A549 (cell line): ENCODE measurements at regions of chr6 and their contacts with region 1.

Region 1: DNA sequence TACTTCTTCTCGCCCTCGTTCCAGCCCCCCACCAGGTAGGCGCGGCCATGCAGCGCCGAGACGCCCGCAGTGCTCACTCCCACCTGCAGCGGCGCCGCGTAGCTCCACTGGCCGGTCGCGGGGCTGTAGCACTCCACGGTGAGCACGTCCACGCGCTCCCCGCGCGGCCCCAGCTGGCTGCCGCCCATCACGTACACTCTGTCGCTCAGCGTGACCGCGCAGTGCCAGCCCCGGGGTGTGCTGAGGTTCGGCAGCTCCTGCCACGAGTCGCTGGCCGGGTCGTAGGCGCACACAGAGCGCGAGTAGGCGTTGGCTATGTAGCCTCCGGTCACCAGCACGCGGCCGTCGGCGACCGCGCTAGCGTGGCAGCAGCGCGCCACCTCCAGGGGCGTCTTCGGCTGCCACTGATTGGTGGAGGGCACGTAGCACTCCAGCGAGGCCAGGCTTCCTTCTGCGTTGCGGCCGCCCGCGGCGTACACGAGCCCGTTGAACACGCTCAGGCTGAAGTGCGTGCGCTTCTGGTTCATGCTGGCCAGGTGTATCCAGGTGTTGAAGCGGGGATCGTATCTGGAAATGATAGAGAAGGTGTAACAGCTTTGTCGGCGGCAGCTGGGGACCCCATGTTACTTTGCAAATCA is 13.7 kb downstream of the KLHL31 start:
- DNase-seq: peak; percentile 44 to 88
- ATAC-seq: peak; percentile 98
- H3K4me3 ChIP-seq: peak overlapping the region; percentile 58
- H3K27ac ChIP-seq: peak overlapping the region; percentile 85 to 99
- H3K4me1 ChIP-seq: peaks cover 34% of the 10 kb centered on the region
- CTCF ChIP-seq: peak; percentile 44
- EP300 ChIP-seq: no peak
- POLR2A ChIP-seq: peak; percentile 64
- RAD21 ChIP-seq: peak; percentile 36 to 52; a peak in 3 of 5 replicates

Region 2: DNA sequence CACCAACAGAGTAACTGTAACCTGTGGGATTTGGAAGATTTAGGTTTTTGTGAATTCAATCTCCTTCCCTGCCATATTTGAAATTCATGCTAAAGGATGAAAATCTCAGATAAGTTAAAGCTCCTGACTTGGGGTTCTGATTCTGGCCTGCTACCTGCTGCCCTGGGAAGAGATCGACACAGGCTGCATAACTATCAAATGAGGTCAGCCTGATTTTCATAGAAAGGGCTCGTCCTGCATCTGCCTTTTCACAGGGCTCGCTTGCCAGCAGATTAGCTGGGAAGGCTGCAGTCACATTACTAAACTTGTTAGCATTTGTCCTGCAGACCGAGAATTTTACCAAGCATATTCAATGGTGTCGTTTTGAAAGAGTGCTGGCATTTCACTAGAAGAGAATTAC is 121.5 kb before region 1 on chr6:
- CTCF ChIA-PET with region 1: interaction called, 13 read pairs
- POLR2A ChIA-PET with region 1: no interaction called
- DNase-seq: no peak
- ATAC-seq: peak in 1 of 2 experiments; percentile 31; a peak in 2 of 6 replicates
- H3K4me3 ChIP-seq: no peak overlapping the region
- H3K27ac ChIP-seq: peak overlapping the region in 1 of 2 experiments; percentile 75; a peak in 3 of 6 replicates
- H3K4me1 ChIP-seq: peaks cover 97% of the 10 kb centered on the region
- CTCF ChIP-seq: no peak
- EP300 ChIP-seq: no peak
- POLR2A ChIP-seq: no peak
- RAD21 ChIP-seq: no peak

Region 3: DNA sequence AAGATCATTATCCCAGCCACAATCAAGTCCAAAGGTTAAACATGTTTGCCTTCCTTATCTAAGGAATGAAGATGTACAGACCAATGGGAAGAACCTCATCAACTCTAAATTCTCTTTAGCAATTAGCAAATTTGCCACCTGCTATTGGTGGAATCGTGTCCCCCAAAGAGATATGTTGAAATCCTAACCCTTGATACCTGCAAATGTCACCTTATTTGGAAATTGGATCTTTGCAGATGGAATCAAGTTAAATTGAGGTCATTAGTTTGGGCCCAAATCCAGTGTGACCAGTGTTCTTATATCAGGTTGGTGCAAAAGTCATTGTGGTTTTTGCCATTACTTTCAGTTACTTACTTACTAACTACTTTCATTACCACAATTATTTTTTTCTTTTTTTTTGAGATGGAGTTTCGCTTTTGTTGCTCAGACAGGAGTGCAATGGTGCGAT is 17.7 kb before region 1 on chr6:
- CTCF ChIA-PET with region 1: interaction called, 10 read pairs
- POLR2A ChIA-PET with region 1: no interaction called
- DNase-seq: no peak
- ATAC-seq: no peak
- H3K4me3 ChIP-seq: no peak overlapping the region
- H3K27ac ChIP-seq: no peak overlapping the region
- H3K4me1 ChIP-seq: peaks cover 21% of the 10 kb centered on the region
- CTCF ChIP-seq: no peak
- EP300 ChIP-seq: no peak
- POLR2A ChIP-seq: no peak
- RAD21 ChIP-seq: no peak

Region 4: GRCh38 chr6:53718597-53719460 is 66.9 kb after region 1 on chr6:
- CTCF ChIA-PET with region 1: interaction called, 11 read pairs
- POLR2A ChIA-PET with region 1: no interaction called
- DNase-seq: peak; percentile 46 to 64
- ATAC-seq: peak; percentile 86 to 88
- H3K4me3 ChIP-seq: no peak overlapping the region
- H3K27ac ChIP-seq: no peak overlapping the region
- H3K4me1 ChIP-seq: peaks cover 7% of the 10 kb centered on the region; the same call in 1 of the 3 replicates
- CTCF ChIP-seq: peak; percentile 71
- EP300 ChIP-seq: no peak
- POLR2A ChIP-seq: no peak
- RAD21 ChIP-seq: peak; percentile 32 to 51; a peak in 4 of 5 replicates